Mammary epithelial cell (primary cell): ENCODE measurements at regions of chr6 and their contacts with region 1.

Region 1: DNA sequence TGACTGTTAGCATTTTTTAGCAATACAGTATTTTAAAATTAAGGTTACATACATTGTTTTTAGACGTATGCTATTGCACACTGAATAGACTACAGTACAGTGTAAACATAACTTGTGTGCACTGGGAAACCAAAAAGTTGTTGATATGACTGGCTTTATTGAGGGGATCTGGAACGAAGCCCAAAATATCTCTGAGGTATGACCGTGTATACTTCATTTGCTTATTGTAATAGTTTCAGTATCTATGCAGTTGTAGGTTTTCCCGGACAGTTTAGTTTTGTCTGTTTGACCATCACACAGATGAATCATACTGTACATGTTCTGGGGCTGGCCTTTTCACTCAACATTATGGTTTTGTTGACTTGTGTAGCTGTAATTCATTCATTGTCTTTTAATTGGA is 6.9 kb upstream of the ZBTB12 start:
- DNase-seq: peak; percentile 74
- H3K4me3 ChIP-seq: no peak overlapping the region
- H3K27ac ChIP-seq: no peak overlapping the region
- H3K4me1 ChIP-seq: peaks cover 10% of the 10 kb centered on the region
- H3K27me3 ChIP-seq: no peaks in the 10 kb centered on the region
- CTCF ChIP-seq: no peak

Region 2: GRCh38 chr6:31945507-31946369 is 36.9 kb after region 1 on chr6 and contains the start of gene CFB:
- CTCF ChIA-PET with region 1: no interaction called
- dilution Hi-C with region 1: loop called (anchors 5 kb)
- in situ Hi-C with region 1: loop called (anchors 5 to 10 kb)
- intact Hi-C with region 1: loop called (anchors 5 kb)
- DNase-seq: peak; percentile 95
- H3K4me3 ChIP-seq: peak within 1 kb of the TSS in 2 of 3 experiments; percentile 4 to 30
- H3K27ac ChIP-seq: peak within 1 kb of the TSS; percentile 65
- H3K4me1 ChIP-seq: peaks cover 19% of the 10 kb centered on the region
- H3K27me3 ChIP-seq: no peaks in the 10 kb centered on the region
- CTCF ChIP-seq: no peak
- total RNA-seq, gene CFB: 1.7 to 7.9 TPM